Esophagus squamous epithelium (tissue), 5 donors: ENCODE measurements at regions of chr11 and their contacts with region 1.

Region 1: GRCh38 chr11:8917157-8917825 is 6.3 kb downstream of the AKIP1 start:
- DNase-seq: no peak
- H3K4me3 ChIP-seq: no peak overlapping the region
- H3K27ac ChIP-seq: peak overlapping the region in 3 of 4 donors; percentile 45 to 61 (median 46)
- H3K4me1 ChIP-seq: peaks cover 0 to 53% (median 27%) of the 10 kb centered on the region in 3 donors
- H3K27me3 ChIP-seq: no peaks in the 10 kb centered on the region
- CTCF ChIP-seq: no peak
- POLR2A ChIP-seq: no peak

Region 2: DNA sequence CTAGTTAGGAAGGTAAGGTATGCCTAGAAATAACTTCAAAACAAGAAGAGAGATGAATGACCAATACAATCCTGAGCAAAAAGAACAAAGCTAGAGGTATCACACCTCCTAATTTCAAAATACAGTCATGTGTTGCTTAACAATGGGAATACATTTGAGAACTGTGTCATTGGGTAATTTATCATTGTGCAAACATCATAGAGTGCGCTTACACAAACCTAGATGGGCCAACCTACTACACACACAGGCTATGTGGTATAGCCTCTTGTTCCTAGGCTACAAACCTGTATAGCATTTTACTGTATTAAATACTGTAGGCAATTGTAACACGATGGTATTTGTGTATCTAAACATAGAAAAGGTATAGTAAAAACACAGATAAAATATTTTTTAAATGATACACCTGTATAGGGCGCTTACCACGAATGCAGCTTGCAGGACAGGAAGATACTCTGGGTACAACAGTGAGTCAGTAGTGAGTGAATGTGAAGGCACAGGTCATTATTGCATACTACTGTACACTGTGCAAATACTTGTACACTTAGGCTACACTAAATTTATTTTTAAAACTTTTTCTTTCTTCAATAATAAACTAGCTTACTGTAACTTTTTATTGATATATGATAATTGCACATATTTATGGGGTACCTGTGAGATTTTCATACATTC is 371.5 kb before region 1 on chr11:
- intact Hi-C with region 1: no loop called
- DNase-seq: no peak
- H3K4me3 ChIP-seq: no peak overlapping the region
- H3K27ac ChIP-seq: no peak overlapping the region
- H3K4me1 ChIP-seq: no peaks in the 10 kb centered on the region
- H3K27me3 ChIP-seq: no peaks in the 10 kb centered on the region
- CTCF ChIP-seq: no peak
- POLR2A ChIP-seq: no peak

Region 3: DNA sequence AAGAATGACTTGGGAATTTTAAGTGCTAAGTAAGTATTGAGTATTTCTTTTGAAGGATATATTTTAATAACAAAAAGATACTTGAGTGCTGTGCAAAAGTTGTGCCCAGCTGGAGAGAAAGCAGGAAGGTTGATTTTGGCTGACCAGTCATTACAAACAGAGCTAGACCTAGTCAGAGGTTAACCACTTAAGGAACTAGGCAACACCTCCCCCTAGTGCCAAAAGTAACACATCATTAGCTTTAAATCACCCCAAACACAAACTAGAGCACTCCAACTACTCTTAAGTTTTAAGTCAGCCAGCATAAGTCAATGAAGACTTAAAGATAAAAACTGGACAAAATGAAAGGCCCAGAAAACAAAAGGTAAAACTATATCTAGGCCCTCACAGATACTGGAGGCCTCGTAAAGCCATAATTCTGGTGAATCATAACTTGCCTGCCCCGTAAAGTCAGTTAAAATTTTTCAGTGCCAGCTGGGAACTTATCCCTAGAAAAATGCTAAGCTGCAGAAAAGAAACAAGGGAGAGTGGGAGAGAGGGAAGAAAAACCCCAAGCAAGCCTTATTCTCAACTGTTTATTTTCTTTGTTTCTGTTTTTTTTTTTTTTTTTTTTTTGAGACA is 42.4 kb after region 1 on chr11:
- intact Hi-C with region 1: loop called (anchors 5 kb)
- DNase-seq: no peak
- H3K4me3 ChIP-seq: no peak overlapping the region
- H3K27ac ChIP-seq: peak overlapping the region; percentile 29 to 55 (median 36)
- H3K4me1 ChIP-seq: peaks cover 8 to 45% (median 22%) of the 10 kb centered on the region in 3 donors
- H3K27me3 ChIP-seq: no peaks in the 10 kb centered on the region
- CTCF ChIP-seq: peak in 5 of 6 experiments; percentile 44 to 74 (median 57)
- POLR2A ChIP-seq: no peak

Region 4: GRCh38 chr11:9302448-9302847 is 385.2 kb after region 1 on chr11:
- intact Hi-C with region 1: no loop called
- DNase-seq: no peak
- H3K4me3 ChIP-seq: no peak overlapping the region
- H3K27ac ChIP-seq: no peak overlapping the region
- H3K4me1 ChIP-seq: no peaks in the 10 kb centered on the region
- H3K27me3 ChIP-seq: no peaks in the 10 kb centered on the region
- CTCF ChIP-seq: no peak
- POLR2A ChIP-seq: no peak